HepG2 (cell line): ENCODE measurements at regions of chr18 and their contacts with region 1.

Region 1: GRCh38 chr18:42114310-42114943 is 159.4 kb downstream of the PIK3C3 start:
- DNase-seq: peak; percentile 71
- ATAC-seq: peak; percentile 88
- H3K4me3 ChIP-seq: peak overlapping the region in 2 of 3 experiments; percentile 42 to 46; a peak in 2 of 6 replicates
- H3K27ac ChIP-seq: peak overlapping the region; percentile 45
- H3K4me1 ChIP-seq: peaks cover 26% of the 10 kb centered on the region
- H3K27me3 ChIP-seq: no peaks in the 10 kb centered on the region
- CTCF ChIP-seq: peak; percentile 89
- EP300 ChIP-seq: no peak
- POLR2A ChIP-seq: no peak
- RAD21 ChIP-seq: peak; percentile 91

Region 2: GRCh38 chr18:42168487-42168886 is 54.1 kb after region 1 on chr18:
- CTCF ChIA-PET with region 1: no interaction called
- POLR2A ChIA-PET with region 1: interaction called, 5 read pairs
- in situ Hi-C with region 1: no loop called
- intact Hi-C with region 1: loop called (anchors 2 kb)
- DNase-seq: peak; percentile 86
- ATAC-seq: peak; percentile 95
- H3K4me3 ChIP-seq: no peak overlapping the region
- H3K27ac ChIP-seq: peak overlapping the region; percentile 79
- H3K4me1 ChIP-seq: peaks cover 45% of the 10 kb centered on the region
- H3K27me3 ChIP-seq: no peaks in the 10 kb centered on the region; a peak in 1 of 5 replicates
- CTCF ChIP-seq: no peak
- EP300 ChIP-seq: peak; percentile 75 to 90; a peak in 3 of 4 replicates
- POLR2A ChIP-seq: no peak
- RAD21 ChIP-seq: no peak

Region 3: DNA sequence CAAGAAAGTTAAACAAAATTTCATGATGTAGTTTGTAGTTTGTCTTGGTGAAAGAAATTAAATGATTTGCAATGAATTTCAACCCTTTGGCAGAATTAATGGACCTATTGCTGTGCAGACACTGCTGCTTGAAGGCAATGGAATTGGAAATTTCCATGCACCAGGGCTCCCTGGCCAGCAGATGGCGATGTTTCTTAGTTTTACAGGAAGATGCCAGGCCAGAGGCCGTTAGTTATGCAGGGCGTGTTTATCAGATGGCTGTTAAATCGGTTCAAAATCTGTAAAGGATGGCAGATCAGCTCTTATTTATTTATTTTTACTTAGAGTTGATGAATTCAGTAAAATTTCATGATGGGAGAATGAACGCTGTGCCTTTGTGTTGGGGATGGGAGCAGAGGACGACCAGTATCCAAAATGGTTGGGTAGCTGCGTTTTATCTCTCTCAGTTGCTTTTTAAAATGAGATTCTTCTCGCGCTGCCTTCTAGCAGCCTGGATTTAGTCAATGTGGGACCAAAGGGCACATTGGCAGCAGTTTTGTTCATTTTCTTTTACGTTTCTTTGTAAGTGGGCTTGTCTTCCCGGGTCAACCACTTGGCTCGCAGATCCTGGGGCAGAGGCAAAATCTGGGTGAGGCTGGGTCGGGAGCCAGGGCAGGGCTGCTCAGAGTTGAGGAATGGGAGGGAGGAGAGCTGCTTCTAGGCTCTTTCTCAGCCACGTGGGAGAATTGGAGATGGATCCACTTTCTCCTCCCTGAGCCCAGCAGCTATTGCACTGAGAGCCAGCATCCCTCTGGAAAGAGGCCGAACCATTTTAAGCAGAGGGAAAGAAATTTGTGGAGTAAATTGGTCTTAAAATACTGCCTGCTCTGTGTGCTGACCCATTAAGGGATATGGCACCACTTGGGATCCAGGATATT is 184.6 kb after region 1 on chr18:
- CTCF ChIA-PET with region 1: interaction called, 5 read pairs
- POLR2A ChIA-PET with region 1: interaction called, 3 read pairs
- in situ Hi-C with region 1: no loop called
- intact Hi-C with region 1: loop called (anchors 1 kb)
- DNase-seq: peak; percentile 68
- ATAC-seq: peak; percentile 94
- H3K4me3 ChIP-seq: no peak overlapping the region
- H3K27ac ChIP-seq: no peak overlapping the region
- H3K4me1 ChIP-seq: peaks cover 15% of the 10 kb centered on the region
- H3K27me3 ChIP-seq: no peaks in the 10 kb centered on the region
- CTCF ChIP-seq: peak; percentile 88
- EP300 ChIP-seq: peak in 1 of 2 experiments; percentile 60; a peak in 1 of 4 replicates
- POLR2A ChIP-seq: no peak
- RAD21 ChIP-seq: peak; percentile 80

Region 4: DNA sequence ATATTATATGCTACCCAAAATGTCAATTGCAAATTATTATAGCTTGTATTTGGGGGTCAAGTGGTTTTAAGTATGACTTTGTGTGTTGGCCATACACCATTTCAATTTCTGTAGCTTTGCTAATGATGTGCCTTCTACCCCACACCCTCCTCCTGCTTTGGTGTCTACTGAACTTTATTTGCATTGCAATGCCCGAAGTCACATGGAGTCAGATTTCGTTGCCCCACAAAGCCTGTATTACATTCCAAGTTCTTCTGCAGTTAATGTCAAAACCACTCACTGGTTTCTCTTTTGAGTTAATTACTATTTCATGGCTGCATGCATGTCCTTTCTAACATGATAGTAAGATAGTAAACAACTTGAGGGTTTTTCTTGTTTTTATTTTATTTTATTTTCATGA is 472.2 kb after region 1 on chr18:
- CTCF ChIA-PET with region 1: no interaction called
- POLR2A ChIA-PET with region 1: no interaction called
- in situ Hi-C with region 1: no loop called
- intact Hi-C with region 1: loop called (anchors 10 kb)
- DNase-seq: no peak
- ATAC-seq: no peak
- H3K4me3 ChIP-seq: no peak overlapping the region
- H3K27ac ChIP-seq: no peak overlapping the region
- H3K4me1 ChIP-seq: no peaks in the 10 kb centered on the region
- H3K27me3 ChIP-seq: no peaks in the 10 kb centered on the region
- CTCF ChIP-seq: no peak
- EP300 ChIP-seq: no peak
- POLR2A ChIP-seq: no peak
- RAD21 ChIP-seq: no peak

Region 5: GRCh38 chr18:43271593-43272432 is 1157.4 kb after region 1 on chr18:
- CTCF ChIA-PET with region 1: interaction called, 12 read pairs
- POLR2A ChIA-PET with region 1: no interaction called
- in situ Hi-C with region 1: loop called (anchors 25 kb)
- intact Hi-C with region 1: loop called (anchors 1 kb)
- DNase-seq: peak; percentile 35
- ATAC-seq: no peak
- H3K4me3 ChIP-seq: no peak overlapping the region
- H3K27ac ChIP-seq: no peak overlapping the region
- H3K4me1 ChIP-seq: no peaks in the 10 kb centered on the region
- H3K27me3 ChIP-seq: no peaks in the 10 kb centered on the region
- CTCF ChIP-seq: peak; percentile 60
- EP300 ChIP-seq: no peak
- POLR2A ChIP-seq: no peak
- RAD21 ChIP-seq: no peak; the same call in 1 of the 2 replicates

Region 6: GRCh38 chr18:43587538-43588153 is 1473.2 kb after region 1 on chr18:
- CTCF ChIA-PET with region 1: no interaction called
- POLR2A ChIA-PET with region 1: interaction called, 3 read pairs
- in situ Hi-C with region 1: no loop called
- intact Hi-C with region 1: loop called (anchors 10 kb)
- DNase-seq: peak; percentile 25
- ATAC-seq: peak; percentile 67
- H3K4me3 ChIP-seq: no peak overlapping the region
- H3K27ac ChIP-seq: no peak overlapping the region
- H3K4me1 ChIP-seq: no peaks in the 10 kb centered on the region
- H3K27me3 ChIP-seq: no peaks in the 10 kb centered on the region
- CTCF ChIP-seq: peak; percentile 59
- EP300 ChIP-seq: no peak
- POLR2A ChIP-seq: no peak
- RAD21 ChIP-seq: no peak